ENCODE measurements at regions of chr20 and their contacts with region 1.

Region 1: GRCh38 chr20:44967207-44967807 is 995 bp downstream of the STK4 start:
- DNase-seq: peak; percentile 29
- ATAC-seq: peak; percentile 15; the same call in 1 of the 2 replicates
- H3K4me3 ChIP-seq: peak overlapping the region; percentile 96
- H3K27ac ChIP-seq: no peak overlapping the region
- H3K4me1 ChIP-seq: peaks cover 35% of the 10 kb centered on the region
- H3K27me3 ChIP-seq: no peaks in the 10 kb centered on the region
- CTCF ChIP-seq: no peak

Region 2: GRCh38 chr20:44946271-44946852 is 20.9 kb before region 1 on chr20:
- CTCF ChIA-PET with region 1: interaction called, 3 read pairs
- POLR2A ChIA-PET with region 1: interaction called, 11 read pairs
- intact Hi-C with region 1: no loop called
- DNase-seq: no peak
- ATAC-seq: no peak
- H3K4me3 ChIP-seq: no peak overlapping the region
- H3K27ac ChIP-seq: no peak overlapping the region
- H3K4me1 ChIP-seq: no peaks in the 10 kb centered on the region
- H3K27me3 ChIP-seq: no peaks in the 10 kb centered on the region
- CTCF ChIP-seq: no peak

Region 3: DNA sequence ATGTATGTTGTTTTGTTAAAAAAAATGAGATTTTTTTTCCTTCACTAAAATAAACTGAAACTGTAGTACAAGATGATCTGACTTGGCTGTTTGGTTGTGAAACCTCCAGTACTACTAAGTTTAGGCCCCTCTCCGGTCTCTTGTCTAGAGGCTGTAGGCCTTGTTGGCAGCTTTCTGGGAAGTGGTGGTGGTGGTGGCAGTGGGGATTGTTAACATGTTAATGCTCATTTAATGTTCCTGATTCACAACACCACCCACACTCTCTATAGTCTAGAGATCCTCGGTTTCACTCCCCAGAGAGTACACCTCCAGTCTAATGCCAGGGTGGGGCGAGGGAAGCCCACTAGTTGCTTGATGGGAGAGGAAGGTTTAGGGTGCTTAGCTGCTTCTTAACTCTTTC is 23.1 kb after region 1 on chr20:
- CTCF ChIA-PET with region 1: no interaction called
- POLR2A ChIA-PET with region 1: interaction called, 12 read pairs
- intact Hi-C with region 1: no loop called
- DNase-seq: no peak
- ATAC-seq: no peak
- H3K4me3 ChIP-seq: no peak overlapping the region
- H3K27ac ChIP-seq: no peak overlapping the region
- H3K4me1 ChIP-seq: peaks cover 12% of the 10 kb centered on the region
- H3K27me3 ChIP-seq: no peaks in the 10 kb centered on the region
- CTCF ChIP-seq: no peak